ENCODE measurements at regions of chr12 and their contacts with region 1.

Region 1: DNA sequence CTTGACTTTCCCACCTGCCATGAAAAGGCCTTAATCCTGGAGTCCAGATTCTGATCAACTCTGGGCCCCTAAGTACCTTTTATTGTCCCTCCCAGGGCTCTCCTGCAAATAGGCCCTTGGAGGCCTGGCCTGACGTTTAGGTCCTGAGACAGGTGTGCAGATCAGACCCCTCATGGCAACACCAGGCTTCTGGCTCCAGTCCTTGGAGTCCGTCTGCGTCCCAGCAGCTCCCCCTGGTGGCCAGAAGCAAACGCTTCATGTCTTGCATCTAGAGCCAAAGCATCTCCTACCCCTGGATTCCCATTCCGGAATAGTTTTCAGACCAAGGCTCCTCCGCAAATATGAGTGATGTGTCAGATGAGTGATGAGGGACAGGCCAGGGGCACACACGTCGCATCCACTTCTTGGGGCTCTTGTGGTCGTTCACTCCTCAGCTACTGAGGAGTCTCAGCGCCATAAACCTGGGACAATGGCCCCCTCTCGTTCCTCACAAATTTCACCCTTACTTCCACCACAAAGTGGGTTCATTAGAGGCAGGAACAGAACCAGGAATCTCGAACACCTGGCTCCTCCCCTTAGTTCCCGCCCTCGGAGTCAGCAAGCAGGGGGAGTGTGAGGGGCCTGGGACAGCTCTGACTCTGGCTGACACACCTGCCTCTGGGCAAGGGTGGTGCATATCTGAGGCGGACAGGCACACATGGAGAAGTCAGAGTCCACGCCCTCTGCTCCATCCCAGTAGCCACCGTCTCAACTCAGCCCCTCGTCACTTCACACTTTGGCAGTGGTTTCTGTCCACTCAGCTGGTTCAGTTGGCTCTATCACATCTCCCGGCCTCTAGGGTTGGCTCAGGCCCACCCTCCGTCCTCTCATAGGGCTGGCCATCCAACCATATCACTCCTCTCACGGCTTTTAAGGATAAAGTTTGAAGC is 77.9 kb upstream of the PWP1 start:
- DNase-seq: peak; percentile 86
- ATAC-seq: peak; percentile 62

Region 2: GRCh38 chr12:107131832-107132616 is 475.7 kb before region 1 on chr12:
- intact Hi-C with region 1: loop called (anchors 1 kb)
- DNase-seq: no peak
- ATAC-seq: peak; percentile 16

Region 3: GRCh38 chr12:107448198-107448597 is 159.5 kb before region 1 on chr12:
- intact Hi-C with region 1: loop called (anchors 5 kb)
- DNase-seq: no peak
- ATAC-seq: no peak

Region 4: GRCh38 chr12:107570721-107571120 is 37.0 kb before region 1 on chr12:
- intact Hi-C with region 1: no loop called
- DNase-seq: no peak
- ATAC-seq: no peak

Region 5: DNA sequence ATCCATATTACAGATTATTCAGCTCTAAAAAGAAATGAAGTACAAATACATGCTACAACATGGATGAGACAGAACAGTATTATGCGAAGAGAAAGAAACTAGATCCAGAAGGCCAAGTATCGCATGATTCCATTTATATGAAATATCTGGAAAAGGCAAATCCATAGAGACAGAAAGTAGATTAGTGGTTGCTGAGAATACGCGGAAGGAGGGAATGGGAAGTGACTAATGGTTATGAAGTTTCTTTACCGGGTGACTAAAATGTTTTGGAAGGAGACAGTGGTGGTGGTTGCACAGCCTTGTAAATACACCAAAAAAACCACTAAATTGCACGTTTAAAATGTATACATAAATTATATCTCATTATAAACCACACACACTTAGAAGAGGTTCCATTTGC is 140.7 kb after region 1 on chr12:
- intact Hi-C with region 1: no loop called
- DNase-seq: no peak
- ATAC-seq: peak; percentile 54